CD8-positive, alpha-beta T cell (primary cell): ENCODE measurements at regions of chr11 and their contacts with region 1.

Region 1: DNA sequence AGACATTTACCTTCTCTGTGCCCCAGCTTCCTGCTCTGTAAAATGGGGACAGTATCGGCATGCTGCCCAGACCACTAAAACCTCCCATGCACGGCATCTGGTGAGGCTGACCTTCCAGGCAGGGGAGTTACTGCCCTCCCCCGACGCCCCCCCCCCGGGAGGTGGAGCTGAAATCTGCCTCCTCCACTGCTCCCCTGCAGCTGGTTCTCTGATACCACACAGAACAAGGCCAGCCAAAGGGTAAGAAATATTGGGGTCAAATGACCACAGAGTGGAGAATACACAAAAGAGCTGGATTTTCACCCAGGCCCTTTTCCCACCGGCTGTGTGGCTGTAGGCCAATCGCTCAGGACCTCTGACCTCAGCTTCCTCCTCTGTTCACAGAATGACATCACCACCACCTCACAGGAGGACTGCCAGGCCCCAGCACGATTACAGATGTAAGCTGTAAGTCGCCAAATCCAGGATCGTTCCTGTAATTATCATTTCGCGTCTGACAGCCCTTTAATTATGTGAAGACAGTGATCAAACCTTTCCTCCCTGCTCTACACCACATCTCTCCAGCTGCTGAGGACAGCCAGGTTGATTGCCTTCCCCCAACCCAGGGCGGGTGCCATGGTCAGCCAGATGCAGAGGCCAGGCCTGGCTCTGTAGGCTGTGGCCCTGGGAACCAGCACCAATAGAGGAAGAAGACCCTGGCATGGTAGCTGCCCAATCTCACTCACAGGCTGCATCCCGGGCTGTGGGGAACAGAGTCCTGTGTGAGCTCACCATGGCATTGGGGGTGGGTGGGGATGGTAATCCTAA is 35.7 kb upstream of the KLHL35 start:
- DNase-seq: no peak
- ATAC-seq: no peak
- H3K4me3 ChIP-seq: no peak overlapping the region
- H3K4me3 Mint-ChIP-seq: no peak overlapping the region
- H3K27ac ChIP-seq: no peak overlapping the region
- H3K27ac Mint-ChIP-seq: no peak overlapping the region
- H3K4me1 ChIP-seq: no peaks in the 10 kb centered on the region
- H3K4me1 Mint-ChIP-seq: no peaks in the 10 kb centered on the region
- H3K27me3 ChIP-seq: no peaks in the 10 kb centered on the region
- H3K27me3 Mint-ChIP-seq: no peaks in the 10 kb centered on the region
- CTCF ChIP-seq: no peak

Region 2: DNA sequence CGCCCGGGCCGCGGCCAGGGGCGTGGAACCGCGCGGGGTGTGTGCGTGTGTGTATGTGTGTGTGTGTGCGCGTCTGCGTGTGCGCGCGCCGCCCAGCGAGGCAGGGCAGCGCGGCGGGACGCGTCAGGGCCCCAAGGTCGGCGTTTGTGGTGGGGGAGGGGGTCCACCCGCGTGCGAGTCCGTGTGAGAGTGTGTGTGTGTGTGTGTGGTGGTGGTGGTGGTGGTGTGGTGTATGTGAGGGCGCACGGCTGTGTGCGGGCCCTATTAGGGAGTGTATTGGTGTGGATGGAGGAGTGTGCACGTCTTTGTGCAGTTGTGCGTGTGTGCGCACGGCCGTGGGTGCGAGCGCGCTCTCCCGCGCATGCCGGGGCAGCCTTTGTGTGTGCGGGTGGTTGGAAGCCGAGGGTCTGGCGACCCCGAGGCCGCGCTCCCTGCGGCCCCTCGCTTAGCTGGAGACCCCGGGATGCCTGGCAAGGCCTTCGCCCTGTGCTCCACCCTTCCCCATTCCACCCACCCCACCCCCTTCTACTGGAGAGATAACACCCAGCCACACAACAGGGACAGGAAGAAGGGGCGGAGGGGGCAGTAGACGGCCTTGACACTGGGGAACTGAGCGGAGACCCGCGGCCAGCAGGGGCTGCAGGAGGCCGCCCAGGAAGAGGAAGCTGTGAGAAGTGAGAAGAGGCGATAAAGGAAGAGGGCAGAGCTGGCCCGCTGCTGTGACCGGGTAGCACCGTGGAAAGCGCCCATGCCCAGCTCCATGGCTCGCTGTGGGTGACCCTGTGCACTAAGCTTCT is 116.7 kb before region 1 on chr11:
- CTCF ChIA-PET with region 1: no interaction called
- POLR2A ChIA-PET with region 1: no interaction called
- intact Hi-C with region 1: no loop called
- DNase-seq: peak; percentile 30 to 83 (median 59)
- ATAC-seq: peak; percentile 67
- H3K4me3 ChIP-seq: peak overlapping the region; percentile 68 to 95
- H3K4me3 Mint-ChIP-seq: peak overlapping the region; percentile 93
- H3K27ac ChIP-seq: peak overlapping the region; percentile 63 to 74
- H3K27ac Mint-ChIP-seq: peak overlapping the region; percentile 89
- H3K4me1 ChIP-seq: peaks cover 60% of the 10 kb centered on the region
- H3K4me1 Mint-ChIP-seq: peaks cover 64% of the 10 kb centered on the region
- H3K27me3 ChIP-seq: no peaks in the 10 kb centered on the region
- H3K27me3 Mint-ChIP-seq: no peaks in the 10 kb centered on the region
- CTCF ChIP-seq: no peak

Region 3: DNA sequence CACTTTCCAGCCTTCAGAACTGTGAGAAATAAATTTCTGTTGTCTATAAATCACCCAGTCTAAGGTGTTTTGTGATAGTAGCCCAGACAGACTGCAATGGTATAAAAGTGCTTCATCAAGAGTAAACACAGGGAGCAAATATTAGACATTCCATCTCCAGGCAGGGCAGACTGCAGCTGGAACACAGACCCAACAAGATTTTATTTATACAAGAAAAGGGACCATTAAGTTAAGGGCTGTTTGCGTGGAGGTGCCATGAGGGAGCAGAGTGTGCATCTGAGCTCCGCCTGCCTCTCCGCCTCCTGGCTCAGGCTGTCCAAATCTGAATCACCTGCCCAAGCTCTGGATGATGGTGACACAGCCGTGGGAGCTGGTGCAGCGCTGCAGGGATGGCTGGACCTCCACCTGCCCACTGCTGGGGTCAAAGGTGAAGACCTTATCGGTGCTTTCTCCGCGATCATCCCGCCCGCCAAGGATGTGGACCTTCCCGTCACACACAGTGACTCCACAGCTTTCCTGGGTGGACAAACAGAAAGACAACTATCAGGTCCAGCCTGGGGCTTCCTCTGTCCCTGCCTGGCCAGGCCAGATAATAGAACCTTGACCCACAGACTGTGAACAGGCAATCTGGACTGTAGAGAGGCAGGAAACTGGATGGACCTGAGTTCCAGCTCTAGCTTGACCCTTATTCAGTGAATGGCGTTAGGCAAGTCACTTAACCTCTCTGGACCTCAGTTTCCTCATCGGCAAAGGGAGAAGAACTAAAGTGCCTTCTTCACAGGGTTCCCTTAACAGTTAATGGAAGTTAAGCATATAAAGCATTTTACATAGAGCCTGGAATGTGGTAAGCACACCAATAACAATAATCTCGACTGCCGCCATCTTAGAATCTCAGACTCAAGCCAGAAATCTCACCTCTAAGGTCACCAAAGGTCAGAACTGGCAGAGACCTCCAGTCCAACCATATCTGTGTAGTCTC is 46.2 kb before region 1 on chr11:
- CTCF ChIA-PET with region 1: no interaction called
- POLR2A ChIA-PET with region 1: no interaction called
- intact Hi-C with region 1: no loop called
- DNase-seq: no peak
- ATAC-seq: no peak
- H3K4me3 ChIP-seq: no peak overlapping the region
- H3K4me3 Mint-ChIP-seq: no peak overlapping the region
- H3K27ac ChIP-seq: no peak overlapping the region
- H3K27ac Mint-ChIP-seq: no peak overlapping the region
- H3K4me1 ChIP-seq: no peaks in the 10 kb centered on the region
- H3K4me1 Mint-ChIP-seq: no peaks in the 10 kb centered on the region
- H3K27me3 ChIP-seq: no peaks in the 10 kb centered on the region
- H3K27me3 Mint-ChIP-seq: no peaks in the 10 kb centered on the region
- CTCF ChIP-seq: no peak

Region 4: DNA sequence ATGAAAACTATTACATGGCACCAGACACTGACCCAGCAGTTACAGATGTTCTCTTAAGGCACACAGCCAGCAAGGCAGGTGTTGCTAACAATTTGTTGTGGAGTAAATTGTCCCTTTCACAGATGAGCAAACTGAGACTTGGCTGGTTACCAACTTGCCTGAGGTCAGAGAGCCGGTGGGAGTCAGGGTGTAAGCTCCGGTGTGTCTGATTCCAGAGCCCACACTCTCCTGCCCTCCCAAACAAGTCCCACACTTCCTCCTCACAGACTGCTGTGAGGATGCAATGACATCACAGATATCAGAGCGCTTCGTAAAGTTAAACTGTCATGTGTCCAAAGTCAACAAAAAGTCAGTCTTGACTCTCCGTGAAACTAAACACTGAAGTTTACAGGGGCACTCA is 44.5 kb after region 1 on chr11:
- CTCF ChIA-PET with region 1: no interaction called
- POLR2A ChIA-PET with region 1: no interaction called
- intact Hi-C with region 1: loop called in 1 of 2 experiments (anchors 5 kb)
- DNase-seq: no peak
- ATAC-seq: no peak
- H3K4me3 ChIP-seq: no peak overlapping the region
- H3K4me3 Mint-ChIP-seq: no peak overlapping the region
- H3K27ac ChIP-seq: no peak overlapping the region
- H3K27ac Mint-ChIP-seq: no peak overlapping the region
- H3K4me1 ChIP-seq: peaks cover 10% of the 10 kb centered on the region
- H3K4me1 Mint-ChIP-seq: peaks cover 18% of the 10 kb centered on the region
- H3K27me3 ChIP-seq: no peaks in the 10 kb centered on the region
- H3K27me3 Mint-ChIP-seq: no peaks in the 10 kb centered on the region
- CTCF ChIP-seq: no peak